Left cardiac atrium (tissue), 4 donors: ENCODE measurements at regions of chr14 and their contacts with region 1.

Region 1: GRCh38 chr14:72023722-72024407 is 91.6 kb downstream of the RGS6 start:
- DNase-seq: no peak
- ATAC-seq: peak in 1 of 2 donors; percentile 72

Region 2: DNA sequence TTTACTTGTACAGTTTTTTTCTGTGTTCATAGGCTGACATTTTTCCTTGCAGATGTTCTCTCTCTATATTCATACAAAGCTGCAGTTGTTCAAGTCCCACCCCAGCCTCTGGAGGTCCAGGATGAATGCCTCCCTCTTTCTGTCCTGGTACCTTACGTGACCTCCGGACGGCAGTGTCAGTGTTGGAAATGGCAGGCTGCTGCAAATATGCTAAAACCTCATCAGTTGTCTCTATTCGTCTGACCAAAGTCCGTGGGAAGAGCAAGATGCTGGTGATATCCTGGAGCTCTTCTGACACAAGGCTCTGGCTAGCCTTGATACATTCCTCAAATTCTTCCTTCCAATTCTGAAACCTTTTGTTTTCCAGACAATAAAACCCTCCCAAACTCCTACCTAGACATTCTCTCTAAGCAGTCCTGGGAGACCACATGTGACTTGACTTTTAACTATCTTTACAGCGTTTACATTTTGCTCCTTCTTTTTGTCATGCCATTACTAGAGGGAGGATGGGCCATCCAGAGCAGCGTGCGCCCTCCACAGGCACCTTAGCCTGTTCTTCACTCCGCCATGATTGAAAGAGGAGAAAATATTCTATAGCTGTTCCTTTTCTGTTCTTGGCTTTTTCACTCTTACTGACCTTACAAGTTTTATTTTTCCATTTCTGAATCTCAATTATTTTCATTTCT is 51.9 kb after region 1 on chr14:
- intact Hi-C with region 1: no loop called
- DNase-seq: no peak
- ATAC-seq: no peak

Region 3: DNA sequence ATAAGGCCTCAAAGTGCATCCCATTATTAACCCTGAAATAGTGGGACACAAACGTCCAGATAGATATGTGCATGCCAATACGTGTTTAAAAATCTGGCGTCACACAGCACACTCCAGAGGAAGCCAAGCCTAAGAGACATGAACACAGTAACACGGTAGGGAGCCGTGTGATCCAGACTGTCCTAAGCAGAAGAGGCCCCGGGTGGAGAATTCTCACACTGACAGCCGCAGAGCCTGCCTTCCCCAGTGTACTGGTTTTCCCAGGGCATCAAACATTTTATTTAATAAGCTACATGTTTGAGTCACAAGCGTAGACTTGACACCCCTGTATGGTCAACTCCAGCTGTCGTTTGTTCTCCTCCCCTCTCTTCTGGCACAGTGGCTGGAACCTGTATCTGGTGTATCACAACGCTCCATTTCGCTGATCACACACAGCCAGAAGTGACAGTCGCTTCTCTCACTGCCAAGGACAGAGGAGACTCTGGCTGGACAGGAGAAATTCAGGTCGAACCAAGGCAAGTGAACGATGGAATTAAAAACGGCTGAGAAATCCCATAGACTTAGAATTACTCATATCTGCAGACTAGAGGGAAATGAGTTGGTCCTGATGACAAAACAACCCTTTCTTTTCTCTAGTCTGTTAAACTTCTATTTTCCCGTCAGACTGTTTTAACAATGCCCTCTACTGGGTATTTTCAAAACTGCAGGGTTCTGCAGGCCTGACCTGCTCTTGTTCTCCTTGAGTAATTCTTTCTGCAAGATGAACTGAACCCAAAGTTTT is 268.2 kb after region 1 on chr14:
- intact Hi-C with region 1: loop called in 1 of 2 experiments (anchors 2 kb)
- DNase-seq: no peak
- ATAC-seq: peak; percentile 77 to 88

Region 4: GRCh38 chr14:72420725-72421474 is 397.0 kb after region 1 on chr14:
- intact Hi-C with region 1: loop called in 1 of 2 experiments (anchors 10 kb)
- DNase-seq: peak; percentile 66
- ATAC-seq: peak in 1 of 2 donors; percentile 44